Ascending aorta (tissue), 2 donors: ENCODE measurements at regions of chr7 and their contacts with region 1.

Region 1: GRCh38 chr7:133081599-133082389 is at the start of gene CHCHD3:
- DNase-seq: peak; percentile 97 to 99
- H3K4me3 ChIP-seq: peak within 1 kb of the TSS; percentile 83 to 85
- H3K27ac ChIP-seq: peak within 1 kb of the TSS; percentile 36 to 82
- H3K4me1 ChIP-seq: peaks cover 4 to 9% of the 10 kb centered on the region in 2 donors
- H3K27me3 ChIP-seq: no peaks in the 10 kb centered on the region
- CTCF ChIP-seq: no peak
- total RNA-seq, gene CHCHD3: 26.2 TPM

Region 2: DNA sequence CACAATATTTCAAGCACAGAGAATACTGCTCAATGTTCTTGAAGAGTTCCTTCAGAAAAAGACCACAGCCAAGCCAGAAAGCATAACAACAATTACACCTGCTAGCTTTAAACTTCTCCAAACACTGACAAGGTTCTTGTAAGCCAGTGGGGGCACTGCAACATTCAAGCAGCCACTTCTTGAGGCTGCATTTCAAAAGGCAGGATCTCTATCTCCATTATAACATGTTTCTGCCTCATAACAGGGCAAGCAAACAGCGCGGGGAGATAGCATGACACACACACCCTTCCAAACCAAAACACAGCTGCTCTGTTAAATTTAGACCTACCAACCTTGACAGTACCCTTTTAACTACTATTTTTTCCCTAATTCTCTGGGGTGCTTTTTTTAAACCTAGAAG is 30.7 kb before region 1 on chr7:
- intact Hi-C with region 1: loop called (anchors 1 kb)
- DNase-seq: no peak
- H3K4me3 ChIP-seq: no peak overlapping the region
- H3K27ac ChIP-seq: peak overlapping the region in 1 of 2 donors; percentile 80
- H3K4me1 ChIP-seq: peaks cover 3 to 29% of the 10 kb centered on the region in 2 donors
- H3K27me3 ChIP-seq: no peaks in the 10 kb centered on the region
- CTCF ChIP-seq: peak in 1 of 3 experiments; percentile 31

Region 3: GRCh38 chr7:133252858-133253518 is 171.2 kb after region 1 on chr7 and contains the start of gene EXOC4:
- intact Hi-C with region 1: loop called (anchors 2 kb)
- DNase-seq: peak; percentile 69 to 96
- H3K4me3 ChIP-seq: peak within 1 kb of the TSS; percentile 87 to 99
- H3K27ac ChIP-seq: peak within 1 kb of the TSS; percentile 81 to 85
- H3K4me1 ChIP-seq: peaks cover 0 to 2% of the 10 kb centered on the region in 2 donors
- H3K27me3 ChIP-seq: no peaks in the 10 kb centered on the region
- CTCF ChIP-seq: no peak
- total RNA-seq, gene EXOC4: 27.1 TPM

Region 4: DNA sequence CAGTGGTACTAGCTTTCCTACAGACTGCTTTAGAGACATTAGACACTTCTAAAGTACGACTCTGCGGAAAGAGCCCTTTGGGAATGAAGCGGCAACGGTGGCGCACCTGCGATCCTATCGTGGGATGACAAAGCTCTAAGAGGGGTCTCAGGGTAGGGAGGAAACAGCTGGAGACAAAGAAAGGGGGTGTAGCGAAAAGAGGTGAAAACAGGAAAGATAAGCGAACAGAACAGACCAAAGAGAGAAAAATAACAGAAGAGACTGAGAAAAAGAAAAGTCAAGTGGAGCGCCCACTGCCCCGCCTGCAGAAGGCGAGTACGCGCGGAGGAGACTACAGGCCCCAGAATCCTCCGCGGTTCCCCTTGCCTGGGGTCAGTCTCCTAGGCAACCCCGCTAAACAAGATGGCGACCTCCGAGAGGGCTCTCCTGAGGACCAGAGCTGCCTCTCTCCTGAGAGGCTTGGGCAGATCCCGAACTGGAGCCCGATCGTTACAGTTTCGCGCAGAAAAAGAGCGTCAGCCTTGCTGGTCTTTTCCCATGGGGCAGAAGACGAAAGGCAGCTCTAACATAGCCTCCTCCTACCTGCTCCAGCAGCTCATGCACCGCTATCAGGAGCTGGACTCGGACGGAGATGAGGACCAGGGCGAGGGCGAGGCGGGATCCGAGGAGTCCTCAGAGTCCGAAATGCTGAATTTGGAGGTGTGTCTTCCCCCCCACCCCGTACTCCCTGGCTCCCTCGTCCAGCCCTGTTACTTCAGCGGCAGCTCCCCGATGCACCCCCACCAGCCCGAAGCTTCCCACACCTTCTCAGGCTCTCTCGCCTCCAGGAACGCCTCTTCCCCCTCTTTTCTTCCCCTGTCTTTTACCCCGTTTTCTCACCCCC is 1045.4 kb after region 1 on chr7 and contains the start of gene LRGUK:
- intact Hi-C with region 1: loop called (anchors 5 kb)
- DNase-seq: peak; percentile 23 to 86
- H3K4me3 ChIP-seq: peak within 1 kb of the TSS; percentile 59 to 72
- H3K27ac ChIP-seq: no peak within 1 kb of the TSS
- H3K4me1 ChIP-seq: peaks cover 0 to 2% of the 10 kb centered on the region in 2 donors
- H3K27me3 ChIP-seq: no peaks in the 10 kb centered on the region
- CTCF ChIP-seq: no peak
- total RNA-seq, gene LRGUK: not detected